AG04449 (cell line): ENCODE measurements at regions of chr6 and their contacts with region 1.

Region 1: DNA sequence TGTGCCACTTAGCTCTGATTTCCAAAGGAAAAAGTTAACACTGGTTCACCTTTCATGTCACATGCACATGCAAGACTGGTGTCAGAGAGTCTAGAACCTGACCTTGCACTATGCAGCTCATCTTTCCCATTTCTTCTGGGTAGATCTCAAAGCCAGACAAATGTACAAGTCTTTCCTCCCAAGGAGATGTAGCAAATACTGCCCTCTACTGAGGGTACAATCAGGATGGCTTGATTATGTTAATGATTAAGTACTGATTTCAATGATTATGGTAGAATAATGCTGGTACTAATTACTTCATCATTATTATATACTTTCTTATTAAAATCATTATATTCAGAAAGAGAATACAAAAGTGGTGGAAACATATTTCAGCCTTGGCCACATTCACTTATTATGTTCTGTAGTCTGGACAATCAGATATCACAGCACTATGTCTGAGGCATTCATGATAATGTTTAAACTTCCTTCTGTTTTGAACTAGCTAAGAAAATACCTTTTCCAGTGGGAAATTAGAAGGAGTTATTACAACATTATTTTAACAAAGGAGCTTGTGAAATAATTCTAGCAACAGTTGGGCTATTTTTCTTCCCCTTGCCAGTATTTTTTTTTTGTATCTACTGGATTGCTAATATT is 68.5 kb upstream of the FOXO3 start:
- DNase-seq: no peak
- H3K4me3 ChIP-seq: no peak overlapping the region
- CTCF ChIP-seq: peak; percentile 52

Region 2: DNA sequence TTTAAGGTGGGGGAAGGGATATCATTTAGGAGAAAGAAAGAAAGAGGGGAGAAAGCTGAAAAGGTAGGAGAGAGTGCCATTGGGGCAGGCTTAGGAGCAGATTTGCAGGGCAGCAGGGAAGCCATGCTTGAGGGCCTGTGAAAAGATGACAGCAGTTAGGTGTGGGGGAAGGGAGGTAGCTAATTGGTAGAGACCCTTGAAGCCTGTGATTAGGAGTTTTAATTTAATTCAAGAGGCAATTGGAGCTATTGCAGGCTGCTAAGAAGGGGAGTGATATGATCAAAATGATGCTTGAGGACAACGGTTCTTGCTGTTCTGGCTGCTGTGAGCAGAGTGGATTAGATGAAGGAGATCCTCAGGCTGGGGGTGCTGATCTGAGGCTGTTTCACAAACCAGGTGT is 509.8 kb before region 1 on chr6:
- CTCF ChIA-PET with region 1: interaction called, 26 read pairs
- POLR2A ChIA-PET with region 1: no interaction called
- DNase-seq: no peak
- H3K4me3 ChIP-seq: no peak overlapping the region
- CTCF ChIP-seq: no peak

Region 3: DNA sequence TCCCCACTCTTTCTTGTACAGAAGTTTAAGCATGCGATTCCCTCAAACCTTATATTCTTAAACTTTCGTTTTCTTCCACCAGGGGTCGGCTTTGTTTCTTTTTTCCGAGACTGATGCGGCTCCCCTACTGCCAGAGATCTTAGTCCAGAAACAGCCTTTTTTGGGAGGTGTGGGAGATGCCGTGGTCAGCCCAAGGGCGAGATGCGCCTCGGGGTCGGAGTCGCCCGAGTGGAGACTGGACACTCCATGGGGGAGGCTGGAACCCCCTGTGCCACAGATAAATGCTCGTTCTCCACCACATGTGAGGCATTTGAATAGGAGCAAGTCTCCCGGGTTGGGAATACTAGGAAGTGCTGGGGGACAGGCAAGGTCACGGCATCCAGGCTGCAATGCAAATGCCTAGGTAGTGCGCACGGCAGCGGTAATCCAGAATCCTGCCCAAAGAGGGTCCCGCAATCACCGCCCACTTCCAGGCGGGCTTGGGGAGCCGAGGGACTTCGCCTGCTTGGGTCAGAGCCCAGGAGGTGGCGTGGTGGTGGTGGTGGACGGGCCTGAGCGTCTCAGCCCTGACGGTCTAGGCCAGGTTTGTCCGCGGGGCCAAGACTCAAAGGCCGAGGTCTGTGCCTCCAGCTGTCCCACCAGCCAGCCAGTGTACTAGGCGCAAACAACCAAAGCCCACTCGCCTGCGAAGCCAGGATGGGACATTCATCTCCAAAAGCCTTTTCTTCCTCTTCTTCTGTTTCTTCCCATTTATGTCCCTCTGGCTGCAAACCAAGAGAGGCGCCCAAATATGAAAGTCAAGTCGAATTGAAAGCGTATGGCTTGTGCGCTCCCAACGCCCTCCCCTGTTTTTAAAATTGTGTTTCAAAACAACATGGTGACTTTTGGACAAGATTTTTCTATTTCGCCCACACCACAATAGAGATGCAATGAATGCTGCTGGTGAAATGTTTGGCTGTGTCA is 378.4 kb before region 1 on chr6:
- CTCF ChIA-PET with region 1: interaction called, 73 read pairs
- POLR2A ChIA-PET with region 1: no interaction called
- DNase-seq: no peak
- H3K4me3 ChIP-seq: peak overlapping the region; percentile 45
- CTCF ChIP-seq: peak; percentile 32

Region 4: GRCh38 chr6:108251252-108251651 is 241.0 kb before region 1 on chr6:
- CTCF ChIA-PET with region 1: interaction called, 11 read pairs
- POLR2A ChIA-PET with region 1: no interaction called
- DNase-seq: no peak
- H3K4me3 ChIP-seq: no peak overlapping the region
- CTCF ChIP-seq: no peak

Region 5: DNA sequence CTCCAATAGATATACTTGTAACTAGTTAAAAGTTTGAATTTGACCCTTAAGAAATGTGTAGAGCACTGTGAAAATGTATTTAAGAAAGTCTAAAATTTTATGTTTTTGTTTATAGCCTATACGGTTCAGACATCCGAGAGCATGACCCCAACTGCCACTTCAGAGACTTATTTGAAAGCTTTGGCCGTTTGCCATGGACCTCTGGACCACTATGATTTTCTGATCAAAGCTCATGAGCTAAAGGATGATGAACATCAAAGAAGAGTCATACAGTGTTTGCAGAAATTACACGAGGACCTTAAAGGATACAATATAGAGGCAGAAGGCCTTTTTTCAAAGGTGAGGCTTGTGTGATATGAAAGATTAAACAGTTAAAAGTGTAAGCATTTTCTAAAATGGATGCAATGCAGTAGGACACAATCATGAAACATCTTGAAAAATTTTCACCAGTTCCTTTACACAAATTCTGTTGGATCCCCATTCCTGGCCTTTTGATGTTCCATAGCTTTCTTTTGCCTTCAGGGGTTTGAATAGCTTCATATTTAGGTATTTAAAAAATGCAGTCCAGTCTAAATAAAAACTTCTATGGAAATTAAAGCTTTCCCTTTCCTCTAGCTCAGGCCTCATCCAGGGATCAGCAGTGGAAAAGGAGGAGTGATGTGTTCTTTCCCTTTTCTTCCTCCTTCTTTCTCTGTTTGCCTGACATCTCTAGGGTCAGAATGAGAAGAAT is 168.4 kb before region 1 on chr6:
- CTCF ChIA-PET with region 1: no interaction called
- POLR2A ChIA-PET with region 1: no interaction called
- DNase-seq: no peak
- H3K4me3 ChIP-seq: no peak overlapping the region
- CTCF ChIP-seq: no peak

Region 6: DNA sequence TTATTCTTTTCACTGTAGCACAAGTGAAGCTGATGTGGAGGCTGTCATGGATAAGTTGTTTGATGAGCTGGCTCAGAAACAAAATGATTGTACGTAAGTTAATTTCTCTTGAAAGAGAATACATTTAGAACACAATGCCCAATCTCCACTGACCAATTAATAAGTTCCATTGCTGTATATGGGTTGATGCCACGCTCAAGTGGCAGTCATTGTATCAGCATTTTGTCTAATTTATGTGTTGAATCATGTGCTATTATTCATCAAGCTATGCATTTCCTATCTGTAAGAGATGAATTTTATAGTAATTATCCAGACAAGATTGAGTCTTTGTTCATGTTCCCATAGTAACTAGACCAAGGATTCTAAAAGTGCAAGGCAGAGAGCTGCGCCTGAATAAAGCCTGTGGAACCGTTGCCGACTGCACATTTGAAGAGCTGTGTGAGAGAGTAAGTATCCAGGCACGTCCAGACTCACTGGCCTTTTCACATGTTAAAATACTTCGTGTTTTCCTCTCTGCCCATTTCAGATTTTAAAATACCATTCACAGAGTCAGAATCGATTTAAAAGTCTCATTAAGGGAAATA is 15.3 kb before region 1 on chr6:
- CTCF ChIA-PET with region 1: interaction called, 19 read pairs
- POLR2A ChIA-PET with region 1: no interaction called
- DNase-seq: no peak
- H3K4me3 ChIP-seq: no peak overlapping the region
- CTCF ChIP-seq: no peak

Region 7: DNA sequence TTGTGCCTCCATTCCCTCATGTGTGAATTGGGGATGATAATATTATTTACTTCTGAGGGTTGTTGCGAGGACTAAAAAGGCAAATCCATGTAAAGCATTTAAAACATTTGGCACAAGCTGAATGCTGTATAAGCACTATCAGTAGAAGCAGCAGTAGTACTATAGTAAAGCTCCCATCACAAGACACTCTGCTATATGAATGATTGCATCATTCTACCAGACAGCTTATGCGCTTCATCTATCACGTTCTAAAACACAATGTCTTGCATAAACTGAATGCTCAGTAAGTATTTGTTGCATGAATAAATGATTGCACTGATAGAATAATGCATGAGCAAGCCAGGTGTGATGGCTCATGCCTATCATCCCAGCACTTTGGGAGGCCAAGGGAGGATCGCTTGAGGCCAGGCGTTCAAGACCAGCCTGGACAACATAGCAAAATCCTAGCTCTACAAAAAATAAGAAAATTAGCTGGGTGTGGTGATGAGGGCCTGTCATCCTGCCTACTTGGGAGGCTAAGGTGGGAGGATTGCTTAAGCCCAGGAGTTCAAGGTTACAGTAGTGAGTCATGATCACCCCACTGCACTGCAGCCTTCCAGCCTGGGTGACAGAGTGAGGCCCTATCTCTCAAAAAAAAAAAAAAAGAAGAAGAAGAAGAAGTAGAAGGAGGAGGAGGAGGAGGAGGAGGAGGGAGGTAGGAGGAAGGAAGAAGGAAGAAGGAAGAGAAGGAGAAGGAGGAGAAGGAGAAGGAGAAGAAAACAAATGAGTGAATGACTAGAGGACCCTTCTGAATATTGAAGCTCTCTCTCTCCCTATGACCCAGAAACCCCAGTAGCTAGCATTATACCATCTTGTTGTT is 18.4 kb after region 1 on chr6:
- CTCF ChIA-PET with region 1: interaction called, 32 read pairs
- POLR2A ChIA-PET with region 1: no interaction called
- DNase-seq: no peak
- H3K4me3 ChIP-seq: no peak overlapping the region
- CTCF ChIP-seq: no peak

Region 8: DNA sequence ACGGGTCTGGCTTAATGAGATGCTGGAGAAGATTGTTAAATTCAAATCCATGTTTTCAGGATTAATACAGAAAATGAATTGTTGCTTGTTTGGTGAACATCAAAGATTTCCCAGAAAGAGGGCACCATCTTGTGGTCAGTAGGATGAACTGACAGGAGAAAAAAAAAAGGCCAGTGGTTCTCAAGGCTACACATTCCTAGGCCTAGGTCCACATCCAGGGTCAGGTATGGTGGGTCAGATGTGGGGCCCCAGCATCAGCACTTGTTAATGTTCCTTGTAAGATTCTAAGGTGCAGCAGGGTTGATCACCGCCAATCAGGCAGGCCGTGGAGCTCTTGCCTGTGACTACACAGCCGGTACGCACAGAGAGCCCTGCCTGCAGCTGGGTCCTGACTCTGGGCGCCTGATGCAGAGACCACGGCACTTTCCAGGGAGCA is 34.5 kb after region 1 on chr6:
- CTCF ChIA-PET with region 1: interaction called, 19 read pairs
- POLR2A ChIA-PET with region 1: no interaction called
- DNase-seq: no peak
- H3K4me3 ChIP-seq: no peak overlapping the region
- CTCF ChIP-seq: peak; percentile 62